BJ (cell line): ENCODE measurements at regions of chr1 and their contacts with region 1.

Region 1: GRCh38 chr1:99198393-99198792 is 65.9 kb upstream of the PLPPR4 start:
- DNase-seq: no peak
- H3K4me3 ChIP-seq: no peak overlapping the region
- H3K27me3 ChIP-seq: no peaks in the 10 kb centered on the region
- CTCF ChIP-seq: no peak

Region 2: DNA sequence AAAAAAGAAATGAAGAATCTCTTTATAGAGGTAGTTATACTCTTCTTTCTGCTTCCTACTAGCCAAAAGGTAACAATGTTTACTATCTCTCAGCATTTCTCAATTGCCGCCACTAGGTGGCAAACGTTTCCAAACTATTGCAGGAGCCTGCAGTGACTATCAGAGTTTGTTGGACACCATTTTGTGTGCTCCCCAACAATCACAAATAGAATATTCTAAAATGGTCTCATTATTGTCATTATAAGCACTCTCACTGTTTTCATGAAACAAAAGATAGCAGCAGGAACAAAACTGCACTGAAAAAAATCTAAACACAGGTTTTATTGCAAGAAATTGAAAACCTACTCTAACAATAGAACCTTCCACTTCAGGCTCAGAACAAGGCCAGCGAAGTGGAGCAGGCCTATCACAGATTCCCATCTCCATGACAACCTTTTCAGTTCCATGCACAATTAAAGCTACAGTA is 18.0 kb before region 1 on chr1:
- CTCF ChIA-PET with region 1: interaction called, 12 read pairs
- POLR2A ChIA-PET with region 1: no interaction called
- DNase-seq: peak; percentile 13
- H3K4me3 ChIP-seq: no peak overlapping the region
- H3K27me3 ChIP-seq: no peaks in the 10 kb centered on the region
- CTCF ChIP-seq: peak; percentile 71